ENCODE measurements at regions of chr19 and their contacts with region 1.

Region 1: DNA sequence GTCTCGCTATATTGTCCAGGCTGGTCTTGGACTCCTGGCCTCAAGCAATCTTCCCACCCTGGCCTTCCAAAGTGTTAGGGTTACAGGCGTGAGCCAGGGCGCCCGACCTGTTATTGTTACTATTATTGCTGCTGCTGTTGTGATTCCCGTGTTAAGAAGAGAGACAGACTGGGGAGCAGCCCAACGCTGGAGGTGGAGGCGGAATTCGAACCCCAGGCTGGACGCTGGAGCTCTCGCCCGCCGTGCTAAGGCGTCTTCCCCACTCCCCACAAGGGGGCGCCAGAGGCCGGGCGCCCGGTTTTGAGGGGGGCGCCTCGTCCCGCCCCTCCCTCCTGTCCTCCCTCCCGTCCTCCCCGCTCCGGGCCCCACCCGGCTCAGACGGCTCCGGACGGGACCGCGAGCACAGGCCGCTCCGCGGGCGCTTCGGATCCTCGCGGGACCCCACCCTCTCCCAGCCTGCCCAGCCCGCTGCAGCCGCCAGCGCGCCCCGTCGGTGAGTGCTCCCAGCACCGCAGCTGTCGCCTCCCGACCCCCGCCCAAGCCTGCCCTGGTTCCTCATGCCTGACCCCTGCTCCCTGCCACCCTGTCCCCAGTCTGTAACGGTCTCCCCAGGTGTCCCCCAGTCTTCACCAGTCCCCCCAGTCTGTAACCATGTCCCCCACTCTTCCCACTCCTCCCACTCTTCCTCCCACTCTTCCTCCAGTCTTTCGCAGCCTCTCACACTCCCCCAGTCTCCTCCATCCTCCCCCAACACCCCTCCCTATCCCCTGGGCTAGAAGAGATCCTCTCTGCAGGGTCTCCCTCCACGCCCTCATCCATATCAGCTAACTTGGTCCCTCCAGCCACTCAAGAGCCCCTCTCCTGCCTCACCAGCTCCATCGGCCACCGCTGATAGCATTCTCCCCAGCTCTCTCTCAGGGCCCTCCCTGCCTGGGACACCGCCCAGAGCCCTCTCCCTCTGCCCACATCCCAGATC is at the start of gene EHD2:
- DNase-seq: peak; percentile 45
- ATAC-seq: peak; percentile 70
- H3K4me3 Mint-ChIP-seq: no peak within 1 kb of the TSS
- H3K27ac Mint-ChIP-seq: no peak within 1 kb of the TSS
- H3K4me1 Mint-ChIP-seq: peaks cover 2% of the 10 kb centered on the region
- H3K27me3 Mint-ChIP-seq: peaks cover 27% of the 10 kb centered on the region
- total RNA-seq, gene EHD2: 0.07 TPM in 1 of 2 experiments, not detected in the other

Region 2: GRCh38 chr19:47745010-47745901 is 31.9 kb after region 1 on chr19 and contains the start of gene NOP53:
- CTCF ChIA-PET with region 1: interaction called, 51 read pairs
- DNase-seq: peak; percentile 97
- ATAC-seq: peak; percentile 80
- H3K4me3 Mint-ChIP-seq: peak within 1 kb of the TSS; percentile 99
- H3K27ac Mint-ChIP-seq: peak within 1 kb of the TSS; percentile 99
- H3K4me1 Mint-ChIP-seq: peaks cover 42% of the 10 kb centered on the region
- H3K27me3 Mint-ChIP-seq: no peaks in the 10 kb centered on the region
- total RNA-seq, gene NOP53: 225 to 227 TPM

Region 3: GRCh38 chr19:47790398-47790814 is 77.1 kb after region 1 on chr19:
- CTCF ChIA-PET with region 1: interaction called, 13 read pairs
- DNase-seq: peak; percentile 84
- ATAC-seq: peak; percentile 80
- H3K4me3 Mint-ChIP-seq: no peak overlapping the region
- H3K27ac Mint-ChIP-seq: no peak overlapping the region
- H3K4me1 Mint-ChIP-seq: peaks cover 2% of the 10 kb centered on the region
- H3K27me3 Mint-ChIP-seq: no peaks in the 10 kb centered on the region

Region 4: DNA sequence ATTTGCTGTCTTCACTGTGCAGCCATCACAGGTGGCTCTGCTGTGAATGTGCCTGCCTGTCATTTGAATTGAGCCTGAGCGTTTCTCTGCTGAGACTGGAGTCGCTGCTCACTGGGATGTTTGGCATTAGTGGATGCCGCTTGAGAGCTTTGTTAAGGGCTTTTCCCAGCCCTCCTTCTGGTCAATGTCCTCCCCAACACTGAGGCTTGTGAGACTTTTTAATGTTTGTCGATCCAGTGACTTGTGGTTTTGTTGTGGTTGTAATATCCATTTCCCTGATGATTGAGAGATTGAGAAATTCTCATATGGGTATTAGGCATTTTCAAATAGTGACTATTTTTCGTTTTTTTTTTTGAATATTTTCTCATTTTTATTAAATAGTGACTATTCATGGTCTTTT is 148.3 kb after region 1 on chr19:
- CTCF ChIA-PET with region 1: no interaction called
- DNase-seq: no peak
- ATAC-seq: no peak
- H3K4me3 Mint-ChIP-seq: no peak overlapping the region
- H3K27ac Mint-ChIP-seq: no peak overlapping the region
- H3K4me1 Mint-ChIP-seq: no peaks in the 10 kb centered on the region
- H3K27me3 Mint-ChIP-seq: peaks cover 6% of the 10 kb centered on the region

Measured in activated CD8-positive, alpha-beta memory T cell treated with anti-CD3 and anti-CD28 coated beads, Interleukin-2, amount 10 ng/mL, durations not matched to agents 7 days and 5 days (primary cell).